ENCODE measurements at regions of chr12 and their contacts with region 1.

Region 1: DNA sequence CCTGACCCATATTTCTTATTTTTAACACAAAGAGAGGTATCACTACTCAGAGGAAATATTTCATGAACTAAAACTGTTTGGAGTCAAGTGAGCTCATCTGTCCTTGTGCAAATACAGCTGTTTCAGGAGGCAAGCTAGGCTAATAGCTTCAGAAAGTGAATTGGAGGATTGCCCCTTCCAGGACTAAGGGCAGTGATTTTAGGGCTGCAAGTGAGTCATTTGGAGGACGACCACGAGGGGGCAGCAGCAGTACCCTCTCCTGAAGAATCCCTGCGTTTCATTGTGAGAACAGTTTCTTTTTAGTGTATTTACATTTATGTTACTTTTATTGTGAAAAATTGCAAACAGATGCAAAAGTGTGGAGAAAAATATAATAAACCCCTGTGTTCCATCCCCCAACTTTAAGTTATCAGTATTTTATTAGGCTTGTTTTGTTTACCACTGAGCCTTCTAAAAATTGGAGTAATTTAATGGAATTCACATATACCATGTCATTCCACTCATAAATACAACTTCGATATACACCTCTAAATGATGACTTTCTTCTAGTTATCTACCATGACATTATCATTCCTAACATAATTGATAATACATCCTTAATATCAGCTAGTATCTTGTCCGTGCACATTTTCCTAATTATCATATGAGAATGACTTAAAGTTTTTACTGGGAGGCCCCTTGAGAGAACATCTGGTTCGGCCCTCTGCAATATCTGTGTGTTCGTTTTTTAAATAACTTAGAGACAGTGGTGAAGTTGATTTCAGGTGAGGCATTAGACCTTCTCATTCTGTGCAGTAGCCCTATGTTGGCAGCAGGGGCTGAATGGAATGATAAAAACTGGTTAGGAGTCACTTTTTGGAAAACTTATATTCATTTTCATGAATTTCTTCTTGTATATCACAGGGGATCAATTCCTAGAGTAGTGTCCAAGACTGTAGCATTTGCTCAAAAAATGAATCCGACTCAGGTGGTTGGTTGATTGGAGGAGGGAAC is 13.7 kb downstream of the FOXJ2 start:
- DNase-seq: peak; percentile 86
- ATAC-seq: peak; percentile 88
- H3K4me3 Mint-ChIP-seq: no peak overlapping the region
- H3K27ac Mint-ChIP-seq: no peak overlapping the region
- H3K4me1 Mint-ChIP-seq: peaks cover 12% of the 10 kb centered on the region
- H3K27me3 Mint-ChIP-seq: no peaks in the 10 kb centered on the region

Region 2: GRCh38 chr12:8018666-8019581 is 27.3 kb before region 1 on chr12:
- CTCF ChIA-PET with region 1: no interaction called
- DNase-seq: peak; percentile 61
- ATAC-seq: peak; percentile 82
- H3K4me3 Mint-ChIP-seq: peak overlapping the region; percentile 57
- H3K27ac Mint-ChIP-seq: no peak overlapping the region
- H3K4me1 Mint-ChIP-seq: peaks cover 6% of the 10 kb centered on the region
- H3K27me3 Mint-ChIP-seq: peaks cover 28% of the 10 kb centered on the region

Region 3: GRCh38 chr12:8032242-8033152 is 13.8 kb before region 1 on chr12 and contains the start of gene FOXJ2:
- CTCF ChIA-PET with region 1: interaction called, 24 read pairs
- DNase-seq: peak; percentile 81
- ATAC-seq: peak; percentile 91
- H3K4me3 Mint-ChIP-seq: peak within 1 kb of the TSS; percentile 83
- H3K27ac Mint-ChIP-seq: peak within 1 kb of the TSS; percentile 79
- H3K4me1 Mint-ChIP-seq: peaks cover 52% of the 10 kb centered on the region
- H3K27me3 Mint-ChIP-seq: no peaks in the 10 kb centered on the region
- total RNA-seq, gene FOXJ2: 17.9 to 18.1 TPM

Region 4: GRCh38 chr12:8057839-8058238 is 11.6 kb after region 1 on chr12:
- CTCF ChIA-PET with region 1: interaction called, 15 read pairs
- DNase-seq: no peak
- ATAC-seq: no peak
- H3K4me3 Mint-ChIP-seq: no peak overlapping the region
- H3K27ac Mint-ChIP-seq: no peak overlapping the region
- H3K4me1 Mint-ChIP-seq: peaks cover 8% of the 10 kb centered on the region
- H3K27me3 Mint-ChIP-seq: no peaks in the 10 kb centered on the region

Region 5: DNA sequence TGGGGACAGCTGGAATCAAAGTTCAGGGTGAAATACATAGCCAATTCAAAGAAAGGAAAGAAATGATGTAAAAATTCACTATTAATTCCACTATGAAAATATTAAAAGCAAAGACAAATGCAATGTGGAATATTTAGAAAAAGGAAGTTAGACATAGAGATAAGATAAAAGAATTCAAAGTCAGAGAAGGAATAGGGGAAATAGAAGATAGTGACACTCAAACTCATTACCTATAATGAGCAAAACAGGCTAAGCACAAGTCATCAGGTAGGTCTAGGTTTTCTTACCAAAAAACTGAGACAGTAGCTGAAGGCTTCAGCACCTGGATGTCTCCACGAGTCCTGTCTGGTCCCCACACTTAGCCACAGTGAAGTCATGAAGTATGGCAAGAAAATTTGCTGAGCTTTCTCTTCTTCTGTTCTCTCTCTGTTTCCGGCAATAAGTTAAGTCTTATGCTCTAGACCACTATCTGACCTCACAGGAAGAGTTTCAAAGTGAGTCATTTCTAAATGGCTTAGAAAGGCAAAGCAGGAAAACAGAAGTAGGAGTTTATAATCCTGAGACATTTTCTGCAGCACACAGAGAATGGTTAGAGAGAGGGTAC is 19.8 kb after region 1 on chr12 and contains the start of gene C3AR1:
- CTCF ChIA-PET with region 1: interaction called, 16 read pairs
- DNase-seq: peak; percentile 63
- ATAC-seq: peak; percentile 99
- H3K4me3 Mint-ChIP-seq: peak within 1 kb of the TSS; percentile 70
- H3K27ac Mint-ChIP-seq: peak within 1 kb of the TSS; percentile 84
- H3K4me1 Mint-ChIP-seq: peaks cover 47% of the 10 kb centered on the region
- H3K27me3 Mint-ChIP-seq: no peaks in the 10 kb centered on the region
- total RNA-seq, gene C3AR1: 9.3 to 10.7 TPM

Measured in activated CD8-positive, alpha-beta memory T cell treated with anti-CD3 and anti-CD28 coated beads, Interleukin-2, amount 10 ng/mL, durations not matched to agents 7 days and 5 days (primary cell).